Panc1 (cell line): ENCODE measurements at regions of chr3 and their contacts with region 1.

Region 1: DNA sequence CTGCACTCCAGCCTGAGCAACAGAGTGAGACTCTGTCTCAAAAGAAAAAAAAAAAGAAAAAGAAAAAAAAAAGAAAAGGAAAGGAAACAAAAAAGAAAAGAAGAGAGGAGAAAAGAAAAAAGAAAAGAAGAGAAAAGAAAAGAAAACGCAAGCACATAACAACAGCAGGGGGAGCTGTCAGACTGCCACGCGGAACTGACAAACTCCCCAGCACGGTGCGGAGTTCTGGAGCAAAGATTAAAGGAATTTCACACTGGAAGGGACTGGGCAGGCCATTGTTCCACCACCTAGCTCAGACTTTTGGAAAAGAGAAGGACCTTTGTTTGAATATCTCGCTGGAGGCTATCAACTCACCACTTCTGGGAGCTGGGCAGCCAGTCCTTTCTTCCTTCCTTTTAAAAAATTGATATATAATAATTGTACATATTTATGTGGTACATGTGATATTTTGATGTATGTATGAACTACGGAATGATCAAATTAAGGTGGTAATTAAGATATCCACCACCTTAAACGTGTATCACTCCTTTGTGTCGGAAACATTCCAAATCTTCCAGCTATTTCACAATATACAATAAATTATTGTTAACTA is 40.5 kb downstream of the DPPA2 start:
- DNase-seq: peak; percentile 5
- ATAC-seq: peak; percentile 76
- H3K4me3 ChIP-seq: no peak overlapping the region
- H3K27ac ChIP-seq: no peak overlapping the region
- H3K4me1 ChIP-seq: no peaks in the 10 kb centered on the region
- H3K27me3 ChIP-seq: no peaks in the 10 kb centered on the region
- CTCF ChIP-seq: peak; percentile 93

Region 2: GRCh38 chr3:109369510-109369909 is 93.7 kb after region 1 on chr3:
- CTCF ChIA-PET with region 1: no interaction called
- POLR2A ChIA-PET with region 1: no interaction called
- in situ Hi-C with region 1: no loop called
- intact Hi-C with region 1: loop called (anchors 10 kb)
- DNase-seq: no peak
- ATAC-seq: peak; percentile 51; the same call in 1 of the 2 replicates
- H3K4me3 ChIP-seq: no peak overlapping the region
- H3K27ac ChIP-seq: no peak overlapping the region
- H3K4me1 ChIP-seq: no peaks in the 10 kb centered on the region
- H3K27me3 ChIP-seq: no peaks in the 10 kb centered on the region
- CTCF ChIP-seq: peak; percentile 38; the same call in 1 of the 2 replicates

Region 3: GRCh38 chr3:109548192-109548938 is 272.6 kb after region 1 on chr3:
- CTCF ChIA-PET with region 1: no interaction called
- POLR2A ChIA-PET with region 1: no interaction called
- in situ Hi-C with region 1: no loop called
- intact Hi-C with region 1: no loop called
- DNase-seq: no peak
- ATAC-seq: no peak
- H3K4me3 ChIP-seq: no peak overlapping the region
- H3K27ac ChIP-seq: no peak overlapping the region
- H3K4me1 ChIP-seq: no peaks in the 10 kb centered on the region
- H3K27me3 ChIP-seq: no peaks in the 10 kb centered on the region
- CTCF ChIP-seq: no peak

Region 4: GRCh38 chr3:110139048-110139447 is 863.2 kb after region 1 on chr3:
- CTCF ChIA-PET with region 1: no interaction called
- POLR2A ChIA-PET with region 1: no interaction called
- in situ Hi-C with region 1: no loop called
- intact Hi-C with region 1: loop called (anchors 5 kb)
- DNase-seq: no peak
- ATAC-seq: no peak
- H3K4me3 ChIP-seq: no peak overlapping the region
- H3K27ac ChIP-seq: no peak overlapping the region
- H3K4me1 ChIP-seq: no peaks in the 10 kb centered on the region
- H3K27me3 ChIP-seq: no peaks in the 10 kb centered on the region
- CTCF ChIP-seq: no peak